ENCODE measurements at regions of chr18 and their contacts with region 1.

Region 1: GRCh38 chr18:9147440-9148202 is 11.0 kb downstream of the ANKRD12 start:
- DNase-seq: peak; percentile 16
- H3K4me3 Mint-ChIP-seq: peak overlapping the region; percentile 38
- H3K27ac Mint-ChIP-seq: peak overlapping the region; percentile 88
- H3K4me1 Mint-ChIP-seq: peaks cover 77% of the 10 kb centered on the region
- H3K27me3 Mint-ChIP-seq: no peaks in the 10 kb centered on the region

Region 2: DNA sequence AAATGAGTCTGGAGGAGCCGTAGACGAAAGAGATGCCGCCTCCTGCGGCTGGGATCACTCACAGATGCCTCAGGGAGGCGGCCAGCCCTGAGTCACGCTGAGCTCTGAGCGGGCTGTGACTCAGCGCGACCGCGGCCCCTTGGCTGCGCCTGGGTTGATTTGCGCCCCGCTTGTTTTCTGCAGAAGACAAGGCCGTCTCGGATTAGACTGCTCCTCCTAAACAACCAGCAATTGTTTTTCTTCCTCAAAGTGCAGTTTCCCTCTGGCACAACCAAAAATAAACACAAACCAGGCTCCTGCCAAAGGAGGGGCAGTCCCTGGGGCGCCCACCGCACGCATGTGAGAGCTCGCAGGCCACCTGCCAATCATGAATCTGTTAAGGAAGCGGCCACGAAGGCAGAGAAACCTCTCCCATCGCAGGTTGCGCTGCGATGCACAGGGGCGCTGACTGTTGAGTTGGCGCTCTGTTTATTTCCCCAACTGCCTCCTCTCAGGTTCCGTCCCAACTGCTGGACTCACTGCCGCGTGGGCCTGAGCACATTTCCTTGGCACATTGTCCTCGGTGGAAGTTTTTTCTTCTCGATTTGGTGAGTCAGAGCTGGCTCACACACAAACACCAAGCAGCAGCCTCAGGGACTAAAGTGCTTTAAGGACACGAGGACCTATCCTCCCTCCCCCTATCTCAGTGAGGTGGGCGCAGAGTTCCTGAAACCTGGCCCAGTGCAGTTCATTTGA is 130.3 kb before region 1 on chr18:
- intact Hi-C with region 1: loop called (anchors 1 kb)
- DNase-seq: peak; percentile 40
- H3K4me3 Mint-ChIP-seq: peak overlapping the region; percentile 64
- H3K27ac Mint-ChIP-seq: peak overlapping the region; percentile 75
- H3K4me1 Mint-ChIP-seq: peaks cover 10% of the 10 kb centered on the region
- H3K27me3 Mint-ChIP-seq: peaks cover 4% of the 10 kb centered on the region

Region 3: GRCh38 chr18:9117980-9118841 is 29.4 kb before region 1 on chr18:
- intact Hi-C with region 1: loop called (anchors 1 kb)
- DNase-seq: no peak
- H3K4me3 Mint-ChIP-seq: peak overlapping the region; percentile 64
- H3K27ac Mint-ChIP-seq: peak overlapping the region; percentile 81
- H3K4me1 Mint-ChIP-seq: peaks cover 83% of the 10 kb centered on the region
- H3K27me3 Mint-ChIP-seq: no peaks in the 10 kb centered on the region

Region 4: GRCh38 chr18:9516437-9517064 is 368.9 kb after region 1 on chr18:
- intact Hi-C with region 1: loop called (anchors 5 kb)
- DNase-seq: no peak
- H3K4me3 Mint-ChIP-seq: no peak overlapping the region
- H3K27ac Mint-ChIP-seq: no peak overlapping the region
- H3K4me1 Mint-ChIP-seq: peaks cover 12% of the 10 kb centered on the region
- H3K27me3 Mint-ChIP-seq: no peaks in the 10 kb centered on the region

Measured in activated T-helper 1 cell treated with anti-CD3 and anti-CD28 coated beads, Interleukin-12 subunit alpha, Interleukin-12 subunit beta, Interleukin-2, Interleukin-4 antibody, amounts not matched to agents 30 ng/mL and 10 ng/mL and 1 ng/mL, durations not matched to agents 14 hours and 24 hours and 36 hours (primary cell).